Activated CD4-positive, alpha-beta T cell treated with anti-CD3 and anti-CD28 coated beads for 36 hours (primary cell): ENCODE measurements at regions of chr2 and their contacts with region 1.

Region 1: DNA sequence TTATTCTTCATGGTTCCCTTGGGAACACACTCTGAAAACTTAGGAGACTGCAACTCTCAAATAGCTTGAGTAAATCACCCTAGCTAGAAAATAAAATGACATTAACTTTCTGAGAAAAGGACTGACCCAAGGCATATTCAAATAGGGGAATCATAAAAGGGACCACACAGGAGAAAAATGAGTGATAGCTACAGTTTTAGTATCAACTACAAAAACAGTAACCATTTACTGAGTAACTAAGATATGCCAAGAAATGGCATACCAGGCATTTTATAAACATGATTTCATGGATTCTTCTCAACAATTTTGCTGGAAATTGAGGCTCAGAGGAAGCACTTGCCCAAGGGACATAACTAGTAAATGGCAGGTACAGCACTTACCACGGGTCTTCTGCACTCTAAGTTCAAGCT is 84.5 kb downstream of the AFF3 start:
- DNase-seq: no peak
- ATAC-seq: no peak
- H3K4me3 Mint-ChIP-seq: no peak overlapping the region
- H3K27ac Mint-ChIP-seq: no peak overlapping the region
- H3K4me1 Mint-ChIP-seq: peaks cover 34% of the 10 kb centered on the region
- H3K27me3 Mint-ChIP-seq: no peaks in the 10 kb centered on the region

Region 2: DNA sequence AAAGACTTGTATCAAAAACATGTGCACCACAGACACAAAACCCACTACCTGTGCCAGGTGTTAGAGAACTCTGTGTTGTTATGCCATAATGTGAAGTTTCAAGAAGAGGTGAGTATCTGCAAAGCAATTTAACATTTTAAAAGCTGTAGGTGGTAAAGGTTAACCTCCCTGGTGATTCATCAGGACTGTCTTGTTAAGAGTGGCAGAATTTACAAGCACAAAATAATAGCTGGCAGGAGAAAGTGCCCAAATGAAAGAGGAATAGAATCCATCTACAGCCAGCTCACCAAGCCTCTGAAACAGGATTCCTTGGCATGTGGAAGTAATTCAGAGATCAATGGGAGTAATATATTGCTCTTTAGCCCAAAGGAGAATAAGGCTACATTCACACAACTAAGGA is 146.2 kb before region 1 on chr2:
- CTCF ChIA-PET with region 1: no interaction called
- POLR2A ChIA-PET with region 1: no interaction called
- intact Hi-C with region 1: no loop called
- DNase-seq: no peak
- ATAC-seq: no peak
- H3K4me3 Mint-ChIP-seq: no peak overlapping the region
- H3K27ac Mint-ChIP-seq: no peak overlapping the region
- H3K4me1 Mint-ChIP-seq: no peaks in the 10 kb centered on the region
- H3K27me3 Mint-ChIP-seq: no peaks in the 10 kb centered on the region

Region 3: GRCh38 chr2:99974275-99974674 is 83.6 kb before region 1 on chr2:
- CTCF ChIA-PET with region 1: no interaction called
- POLR2A ChIA-PET with region 1: no interaction called
- intact Hi-C with region 1: loop called in 1 of 2 experiments (anchors 2 kb)
- DNase-seq: peak; percentile 20
- ATAC-seq: peak; percentile 77
- H3K4me3 Mint-ChIP-seq: no peak overlapping the region
- H3K27ac Mint-ChIP-seq: no peak overlapping the region
- H3K4me1 Mint-ChIP-seq: peaks cover 19% of the 10 kb centered on the region
- H3K27me3 Mint-ChIP-seq: no peaks in the 10 kb centered on the region

Region 4: DNA sequence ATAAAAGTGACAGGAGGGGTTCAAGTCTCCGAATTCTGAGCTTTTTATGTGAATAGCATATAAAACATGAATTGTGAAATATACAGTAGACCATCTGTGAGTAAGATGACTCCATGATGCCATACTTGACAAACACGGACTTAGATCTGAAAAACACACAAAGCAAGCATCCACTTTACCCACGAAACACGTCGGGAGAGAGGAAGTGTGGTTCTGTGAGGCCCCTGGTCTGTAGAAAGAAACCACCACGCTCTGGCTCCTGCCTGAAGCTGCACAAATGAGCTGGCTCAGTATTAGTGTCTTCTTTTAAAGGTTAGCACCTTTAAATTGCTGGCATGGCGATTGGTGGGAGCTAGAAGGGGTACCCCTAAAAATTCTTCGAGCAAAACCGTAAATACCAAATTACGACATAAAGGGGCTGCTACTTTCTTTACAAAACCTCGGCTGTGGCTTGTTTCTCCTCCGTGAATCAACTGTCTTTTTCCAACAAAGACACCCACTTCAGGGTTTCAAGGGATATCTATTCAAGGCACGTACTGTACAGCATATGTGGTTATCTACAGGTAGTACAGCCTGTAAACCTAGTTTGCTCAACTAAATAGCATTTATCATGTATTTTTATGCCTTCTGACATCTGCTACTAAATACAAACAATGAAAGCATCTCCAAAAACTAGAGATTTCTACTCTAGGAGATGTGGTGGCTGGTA is 13.6 kb after region 1 on chr2:
- CTCF ChIA-PET with region 1: no interaction called
- POLR2A ChIA-PET with region 1: no interaction called
- intact Hi-C with region 1: loop called in 1 of 2 experiments (anchors 1 kb)
- DNase-seq: peak; percentile 50
- ATAC-seq: peak; percentile 50
- H3K4me3 Mint-ChIP-seq: no peak overlapping the region
- H3K27ac Mint-ChIP-seq: peak overlapping the region; percentile 20
- H3K4me1 Mint-ChIP-seq: peaks cover 39% of the 10 kb centered on the region
- H3K27me3 Mint-ChIP-seq: peaks cover 3% of the 10 kb centered on the region

Region 5: DNA sequence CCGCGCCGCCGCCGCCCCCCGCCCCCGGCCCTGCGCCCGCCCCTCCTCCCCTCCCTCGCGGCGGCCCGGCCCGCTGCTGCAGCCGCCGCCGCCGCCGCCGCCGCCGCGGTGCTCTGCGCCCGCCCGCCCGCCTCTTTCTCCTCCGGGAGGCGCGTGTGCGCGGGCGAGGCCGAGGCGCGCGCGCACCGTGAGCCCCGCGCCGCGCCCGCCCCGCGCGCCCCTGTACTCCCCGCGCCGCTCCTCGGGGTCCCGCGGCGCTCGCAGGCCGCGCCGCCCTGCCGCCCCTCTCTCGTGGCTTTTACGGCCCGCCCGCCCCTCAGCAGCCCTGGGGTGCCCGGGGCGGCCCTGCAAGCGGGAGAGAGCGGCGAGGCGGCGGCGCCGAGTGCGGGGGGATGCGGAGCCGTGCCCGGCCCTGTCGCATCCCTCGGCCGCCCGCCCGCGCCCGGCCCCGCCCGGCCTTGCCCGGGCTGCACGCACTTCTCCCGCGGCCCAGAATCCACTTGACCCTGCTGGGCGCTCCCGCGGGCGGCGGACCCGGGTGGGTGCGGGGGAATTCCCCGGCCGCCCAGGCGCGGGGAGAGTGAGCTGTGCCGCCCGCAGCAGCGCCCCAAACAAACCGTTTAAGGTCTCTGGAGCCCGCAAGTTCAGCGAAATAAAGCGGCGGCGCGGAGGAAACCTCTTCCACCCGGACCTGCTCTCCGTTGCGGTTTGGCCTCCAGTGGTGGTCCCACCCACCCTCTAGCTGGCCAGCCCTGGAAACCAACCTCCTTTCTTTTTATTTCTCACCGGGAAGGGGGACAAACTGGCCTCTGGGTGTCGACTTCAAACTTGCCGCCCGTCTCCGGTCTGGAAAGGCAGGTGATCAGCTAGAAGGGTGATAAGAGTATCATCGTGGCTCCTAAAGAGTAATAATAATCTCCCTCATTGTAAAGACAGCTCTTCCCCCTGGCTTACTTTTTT is 47.1 kb after region 1 on chr2:
- CTCF ChIA-PET with region 1: no interaction called
- POLR2A ChIA-PET with region 1: no interaction called
- intact Hi-C with region 1: loop called in 1 of 2 experiments (anchors 2 kb)
- DNase-seq: peak; percentile 52
- ATAC-seq: peak; percentile 76
- H3K4me3 Mint-ChIP-seq: peak overlapping the region; percentile 72
- H3K27ac Mint-ChIP-seq: peak overlapping the region; percentile 56
- H3K4me1 Mint-ChIP-seq: peaks cover 12% of the 10 kb centered on the region
- H3K27me3 Mint-ChIP-seq: peaks cover 9% of the 10 kb centered on the region

Region 6: GRCh38 chr2:100580367-100581276 is 522.7 kb after region 1 on chr2:
- CTCF ChIA-PET with region 1: no interaction called
- POLR2A ChIA-PET with region 1: no interaction called
- intact Hi-C with region 1: loop called in 1 of 2 experiments (anchors 10 kb)
- DNase-seq: peak; percentile 64
- ATAC-seq: peak; percentile 88
- H3K4me3 Mint-ChIP-seq: peak overlapping the region; percentile 56
- H3K27ac Mint-ChIP-seq: peak overlapping the region; percentile 95
- H3K4me1 Mint-ChIP-seq: peaks cover 38% of the 10 kb centered on the region
- H3K27me3 Mint-ChIP-seq: no peaks in the 10 kb centered on the region